Mammary epithelial cell (primary cell): ENCODE measurements at regions of chr2 and their contacts with region 1.

Region 1: GRCh38 chr2:231514103-231514950 is 15.9 kb downstream of the NMUR1 start:
- DNase-seq: peak; percentile 97
- H3K4me3 ChIP-seq: peak overlapping the region; percentile 68 to 89 (median 73)
- H3K27ac ChIP-seq: peak overlapping the region; percentile 83
- H3K4me1 ChIP-seq: peaks cover 6% of the 10 kb centered on the region
- H3K27me3 ChIP-seq: no peaks in the 10 kb centered on the region
- CTCF ChIP-seq: no peak

Region 2: DNA sequence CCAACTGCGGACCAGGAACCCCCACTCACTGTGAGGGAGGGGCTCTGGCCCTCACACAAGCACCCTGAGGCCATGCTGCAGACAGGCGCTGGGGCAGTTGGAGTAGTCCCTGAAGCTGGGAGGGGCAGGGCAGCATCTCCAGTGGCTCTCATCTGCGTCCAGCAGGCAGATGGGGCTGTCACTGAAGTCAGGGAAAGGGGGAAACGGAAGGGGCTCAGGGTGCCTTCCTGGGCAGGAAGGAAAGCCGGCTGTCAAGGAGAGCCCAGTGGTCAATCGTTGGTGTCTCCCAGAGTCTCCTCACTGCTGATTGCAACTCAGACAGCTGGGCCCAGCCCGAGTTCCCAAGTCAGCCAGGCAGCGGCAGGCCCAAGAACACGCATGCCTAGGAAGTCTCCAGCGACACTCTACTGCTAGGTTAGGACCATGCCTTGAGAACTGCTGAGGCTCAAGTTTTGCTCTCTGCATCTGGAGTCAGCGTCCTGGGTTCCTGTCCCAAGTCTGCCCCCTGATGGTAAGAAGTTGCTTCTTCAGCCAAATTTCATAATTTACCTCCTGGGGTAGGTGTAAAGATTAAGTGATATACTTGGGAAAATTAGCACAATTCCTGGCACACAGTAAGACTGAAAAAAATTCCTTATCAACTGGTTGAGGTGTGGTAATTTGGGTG is 43.4 kb after region 1 on chr2:
- CTCF ChIA-PET with region 1: interaction called, 20 read pairs
- dilution Hi-C with region 1: no loop called
- in situ Hi-C with region 1: no loop called
- intact Hi-C with region 1: loop called (anchors 1 kb)
- DNase-seq: peak; percentile 50
- H3K4me3 ChIP-seq: no peak overlapping the region
- H3K27ac ChIP-seq: no peak overlapping the region
- H3K4me1 ChIP-seq: no peaks in the 10 kb centered on the region
- H3K27me3 ChIP-seq: no peaks in the 10 kb centered on the region
- CTCF ChIP-seq: peak; percentile 62 to 78

Region 3: GRCh38 chr2:231604685-231605606 is 90.6 kb after region 1 on chr2:
- CTCF ChIA-PET with region 1: interaction called, 6 read pairs
- dilution Hi-C with region 1: no loop called
- in situ Hi-C with region 1: no loop called
- intact Hi-C with region 1: loop called (anchors 1 kb)
- DNase-seq: peak; percentile 94
- H3K4me3 ChIP-seq: peak overlapping the region; percentile 25 to 56 (median 46)
- H3K27ac ChIP-seq: peak overlapping the region; percentile 96
- H3K4me1 ChIP-seq: peaks cover 16% of the 10 kb centered on the region
- H3K27me3 ChIP-seq: no peaks in the 10 kb centered on the region
- CTCF ChIP-seq: no peak